Dorsolateral prefrontal cortex (tissue), 120 donors: ENCODE measurements at regions of chr10 and their contacts with region 1.

Region 1: GRCh38 chr10:60652628-60653027 is 125.7 kb upstream of the CDK1 start:
- DNase-seq: no peak
- H3K4me3 ChIP-seq: no peak overlapping the region
- H3K27ac ChIP-seq: no peak overlapping the region
- H3K27me3 ChIP-seq: peaks cover 0 to 2% (median 0%) of the 10 kb centered on the region in 45 donors
- CTCF ChIP-seq: no peak

Region 2: GRCh38 chr10:60760749-60761148 is 108.1 kb after region 1 on chr10:
- intact Hi-C with region 1: loop called in 1 of 2 experiments (anchors 10 kb)
- DNase-seq: no peak
- H3K4me3 ChIP-seq: no peak overlapping the region
- H3K27ac ChIP-seq: no peak overlapping the region
- H3K27me3 ChIP-seq: peaks cover 0 to 5% (median 0%) of the 10 kb centered on the region in 45 donors
- CTCF ChIP-seq: no peak